HEK293T (cell line): ENCODE measurements at regions of chr16 and their contacts with region 1.

Region 1: GRCh38 chr16:117379-118365 is 20.8 kb downstream of the NPRL3 start:
- DNase-seq: peak; percentile 76

Region 2: GRCh38 chr16:133716-134115 is 16.0 kb after region 1 on chr16:
- CTCF ChIA-PET with region 1: interaction called, 10 read pairs
- POLR2A ChIA-PET with region 1: interaction called, 3 read pairs
- DNase-seq: no peak